Motor neuron (in vitro differentiated cells): ENCODE measurements at regions of chr17 and their contacts with region 1.

Region 1: DNA sequence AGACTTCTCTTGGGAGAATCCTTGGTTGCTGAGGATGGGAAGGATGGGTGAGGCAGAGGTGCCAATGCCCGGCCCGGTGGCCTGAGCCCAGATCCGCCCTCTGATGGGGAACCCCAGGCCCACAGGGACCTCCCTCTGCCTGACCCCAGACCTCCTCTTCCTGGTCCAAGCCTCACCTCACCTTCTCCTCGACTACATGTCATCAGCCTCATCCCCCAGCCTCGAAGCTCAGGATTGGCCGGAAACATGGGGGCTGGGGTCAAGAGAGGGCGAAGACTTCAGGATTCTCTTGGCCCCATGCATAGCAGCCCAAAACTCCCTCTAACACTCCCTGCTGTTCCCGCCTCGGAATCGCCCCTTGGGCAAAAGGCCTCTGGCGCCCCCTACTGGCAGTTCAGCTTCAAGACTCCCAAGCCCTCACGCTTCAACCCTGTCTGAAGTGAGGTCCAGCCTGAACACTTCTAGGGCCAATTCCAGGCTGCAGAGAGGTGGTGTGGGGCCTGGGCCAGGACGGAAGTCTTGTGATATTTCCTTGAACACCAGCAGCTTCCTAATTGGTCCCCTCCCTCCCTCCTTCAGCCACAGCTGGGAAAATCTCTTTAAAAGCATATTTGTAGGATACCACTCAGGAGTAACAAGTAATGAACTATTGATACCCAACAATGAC is 47.2 kb downstream of the ARHGAP27 start:
- ATAC-seq: peak; percentile 77 to 99 (median 94)
- H3K4me3 ChIP-seq: no peak overlapping the region
- H3K27ac ChIP-seq: no peak overlapping the region
- H3K4me1 ChIP-seq: no peaks in the 10 kb centered on the region

Region 2: DNA sequence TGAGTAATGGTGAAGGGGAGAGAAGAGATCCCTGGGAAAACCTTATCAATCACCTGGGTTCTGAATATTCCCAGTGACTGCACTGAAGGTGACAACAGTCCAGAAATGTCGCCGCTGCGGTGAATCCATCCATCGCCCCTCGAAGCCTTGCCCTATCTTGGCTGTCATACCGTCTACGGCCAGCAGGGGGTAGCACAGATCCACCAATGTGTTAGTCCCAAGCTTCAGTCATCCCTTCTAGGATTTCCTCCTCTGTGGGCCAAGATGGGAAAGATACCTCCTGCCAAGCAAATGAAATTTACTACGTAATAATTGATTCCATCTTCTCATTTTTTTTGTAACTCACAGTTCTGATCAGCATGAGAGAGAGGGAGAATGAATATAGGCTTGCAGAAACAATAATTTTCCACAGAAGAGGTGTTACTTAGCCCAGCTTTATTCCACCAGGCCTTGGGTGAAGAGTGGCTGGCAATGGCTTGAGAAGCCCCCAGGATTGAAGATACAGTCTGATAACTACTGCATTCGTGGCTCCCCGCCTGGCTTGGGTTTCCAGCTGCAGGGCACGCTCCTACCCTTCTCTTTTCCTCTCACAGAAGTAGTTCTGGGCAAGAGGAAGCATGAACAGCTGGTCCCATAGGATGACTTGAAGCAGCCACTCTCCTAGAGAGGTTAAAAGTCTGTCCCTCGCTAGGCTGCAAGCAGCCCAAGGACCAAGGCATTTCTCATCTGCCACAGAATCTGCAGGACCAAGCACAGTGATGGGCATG is 166.4 kb before region 1 on chr17:
- in situ Hi-C with region 1: loop called in 5 of 9 experiments (anchors 10 to 25 kb)
- ATAC-seq: peak; percentile 56 to 93 (median 68)
- H3K4me3 ChIP-seq: no peak overlapping the region
- H3K27ac ChIP-seq: no peak overlapping the region
- H3K4me1 ChIP-seq: peaks cover 0 to 11% of the 10 kb centered on the region in 2 donors

Region 3: DNA sequence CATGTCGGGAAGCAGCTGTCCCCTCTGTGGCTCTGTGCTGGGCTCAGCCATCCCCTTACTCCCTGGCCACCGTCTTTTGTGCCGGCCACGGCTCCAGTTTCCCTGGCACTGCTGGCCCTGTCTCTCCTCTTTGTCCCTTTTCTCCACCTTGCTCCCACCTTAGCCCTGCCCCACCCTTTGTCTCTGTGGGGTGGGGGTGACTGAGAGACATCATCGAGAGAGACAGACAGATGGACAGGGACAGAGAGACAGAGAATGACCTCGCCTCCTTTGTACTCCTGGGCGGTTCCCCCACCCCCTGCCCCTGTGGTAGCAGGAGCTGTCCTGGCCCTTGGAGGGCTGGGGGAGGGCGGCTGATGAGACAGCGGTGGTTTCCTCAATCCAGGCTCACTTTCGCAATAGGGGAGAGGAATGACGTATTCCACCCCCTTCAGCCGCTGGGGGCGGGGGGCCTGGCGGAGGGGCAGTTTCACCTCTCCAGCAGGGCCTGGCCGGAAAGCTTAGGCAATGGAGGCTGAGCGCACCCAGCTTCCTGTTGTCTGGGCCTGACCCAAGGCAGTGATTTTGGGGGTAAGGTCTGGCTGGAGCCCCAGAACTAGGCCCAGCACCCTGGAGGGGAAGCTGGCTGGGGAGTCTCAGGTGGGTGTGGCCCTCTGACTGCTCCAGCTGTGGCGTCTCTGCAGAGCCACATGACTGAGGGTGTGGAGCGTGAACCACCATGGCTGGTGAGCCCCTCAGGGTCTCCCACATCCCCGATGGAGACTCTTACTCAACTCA is 156.5 kb before region 1 on chr17:
- in situ Hi-C with region 1: loop called in 5 of 9 experiments (anchors 10 to 25 kb)
- ATAC-seq: peak; percentile 57 to 82 (median 76)
- H3K4me3 ChIP-seq: no peak overlapping the region
- H3K27ac ChIP-seq: peak overlapping the region in 1 of 2 donors; percentile 48
- H3K4me1 ChIP-seq: peaks cover 11 to 28% of the 10 kb centered on the region in 2 donors

Region 4: DNA sequence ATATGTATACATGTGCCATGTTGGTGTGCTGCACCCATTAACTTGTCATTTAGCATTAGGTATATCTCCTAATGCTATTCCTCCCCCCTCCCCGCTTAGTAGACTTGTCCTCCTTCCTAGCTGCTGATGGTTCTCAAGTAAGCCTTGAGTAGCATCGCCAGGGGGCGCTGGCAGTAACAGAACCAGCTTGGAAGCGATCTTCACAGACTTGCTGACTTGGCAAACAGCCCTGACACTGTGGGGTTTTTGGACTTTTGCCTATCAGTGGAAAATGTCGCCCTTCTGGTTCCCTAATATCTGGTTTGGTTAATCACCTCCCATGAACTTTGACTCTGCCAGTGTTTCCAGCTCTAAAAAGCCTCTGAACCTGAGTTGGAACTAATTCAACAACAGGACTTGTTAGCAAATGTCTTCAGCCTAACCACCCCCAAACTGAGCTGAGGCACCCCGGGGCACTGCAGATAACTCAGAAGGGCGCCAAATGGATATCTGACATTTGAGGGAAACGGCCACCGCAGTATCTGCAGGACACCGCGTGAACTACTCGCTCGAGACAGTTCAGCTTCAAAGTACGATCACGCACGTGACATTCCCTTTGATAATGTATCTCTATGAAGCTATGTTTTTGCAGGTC is 108.1 kb before region 1 on chr17:
- in situ Hi-C with region 1: loop called in 4 of 9 experiments (anchors 5 to 25 kb)
- ATAC-seq: peak; percentile 72 to 87 (median 80)
- H3K4me3 ChIP-seq: no peak overlapping the region
- H3K27ac ChIP-seq: no peak overlapping the region
- H3K4me1 ChIP-seq: no peaks in the 10 kb centered on the region

Region 5: DNA sequence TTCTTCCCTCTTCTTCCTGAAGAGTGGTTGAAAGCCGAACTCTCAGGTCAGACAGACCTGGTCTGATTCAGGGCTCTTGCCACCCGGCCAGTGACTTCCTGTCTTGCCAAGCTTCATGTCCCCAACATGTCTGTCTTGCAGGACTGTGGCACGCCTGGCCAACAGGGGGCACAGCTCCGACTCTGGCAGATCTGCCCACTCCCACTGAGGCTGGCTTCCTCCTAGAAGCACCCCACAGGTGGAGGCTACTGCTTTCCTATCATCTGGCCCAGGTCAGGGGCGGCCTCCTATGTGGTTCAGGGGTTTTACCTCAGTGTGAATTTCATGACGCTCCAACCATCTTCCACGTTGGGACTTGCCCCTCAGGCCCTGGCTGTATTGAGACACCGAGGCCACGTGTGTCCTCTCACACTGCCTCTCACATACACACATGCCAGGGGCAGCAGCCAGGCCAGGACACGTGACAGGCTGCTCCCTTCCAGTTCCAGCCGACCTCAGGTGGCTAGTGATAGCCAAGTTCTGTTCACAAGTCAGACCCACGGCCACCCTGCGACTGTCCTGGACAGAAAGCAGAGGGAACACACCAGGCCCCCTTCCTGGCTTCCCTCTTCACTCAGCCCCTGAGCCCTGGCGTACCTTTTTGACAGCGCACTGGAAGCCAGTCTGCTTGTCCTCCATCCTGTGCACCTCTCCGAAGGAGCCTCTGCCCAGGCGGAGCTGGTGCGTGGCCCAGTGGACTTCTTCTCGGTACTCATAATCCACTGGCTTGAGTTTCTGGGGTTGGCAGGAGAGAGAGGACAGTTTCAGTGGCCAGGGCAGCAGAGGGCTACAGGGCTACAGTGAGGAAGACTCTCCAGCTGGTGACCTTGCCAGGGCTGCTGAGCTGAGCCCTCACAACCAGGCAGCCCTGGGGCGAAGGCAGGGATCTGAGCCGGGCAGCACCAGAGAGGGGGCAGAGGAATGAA is 101.0 kb before region 1 on chr17:
- in situ Hi-C with region 1: loop called in 4 of 9 experiments (anchors 5 to 25 kb)
- ATAC-seq: peak in 1 of 8 experiments; percentile 24
- H3K4me3 ChIP-seq: no peak overlapping the region
- H3K27ac ChIP-seq: no peak overlapping the region
- H3K4me1 ChIP-seq: peaks cover 0 to 7% of the 10 kb centered on the region in 2 donors

Region 6: GRCh38 chr17:45573924-45574770 is 188.7 kb after region 1 on chr17:
- in situ Hi-C with region 1: no loop called
- ATAC-seq: no peak
- H3K4me3 ChIP-seq: no peak overlapping the region
- H3K27ac ChIP-seq: no peak overlapping the region
- H3K4me1 ChIP-seq: no peaks in the 10 kb centered on the region